Thyroid gland (tissue), 4 donors: ENCODE measurements at regions of chr20 and their contacts with region 1.

Region 1: GRCh38 chr20:35702051-35702823 is 3.0 kb downstream of the ROMO1 start:
- DNase-seq: no peak
- H3K4me3 ChIP-seq: no peak overlapping the region
- H3K27ac ChIP-seq: no peak overlapping the region
- H3K4me1 ChIP-seq: peaks cover 4 to 19% of the 10 kb centered on the region in 2 donors
- H3K27me3 ChIP-seq: no peaks in the 10 kb centered on the region
- CTCF ChIP-seq: no peak
- POLR2A ChIP-seq: no peak

Region 2: DNA sequence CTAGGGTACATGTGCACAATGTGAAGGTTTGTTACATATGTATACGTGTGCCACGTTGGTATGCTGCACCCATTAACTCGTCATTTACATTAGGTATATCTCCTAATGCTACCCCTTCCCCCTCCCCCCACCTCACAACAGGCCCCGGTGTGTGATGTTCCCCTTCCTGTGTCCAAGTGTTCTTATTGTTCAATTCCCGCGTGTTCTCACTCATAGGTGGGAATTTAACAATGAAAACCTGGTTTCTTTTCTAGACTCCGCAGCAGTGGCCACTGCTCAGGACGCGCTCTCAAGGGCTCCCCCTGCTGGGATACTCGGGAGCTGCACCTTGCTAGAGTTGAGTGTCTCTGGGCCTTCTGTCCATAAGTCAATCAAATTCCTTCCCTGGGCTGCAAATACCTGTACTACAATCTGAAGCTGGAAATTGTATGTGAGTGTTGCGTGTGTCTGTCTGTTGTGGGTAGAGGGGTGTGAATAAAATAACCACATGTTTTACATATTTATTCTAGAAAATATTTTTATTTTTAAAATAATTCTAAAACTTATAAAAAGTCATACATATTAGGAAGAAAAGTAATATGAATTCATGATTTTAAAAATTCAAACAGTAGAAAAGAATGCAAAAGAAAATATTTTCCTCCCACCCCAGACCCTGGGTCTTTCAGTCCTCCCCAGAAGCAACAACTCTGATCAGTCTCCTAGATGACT is 255.0 kb before region 1 on chr20:
- intact Hi-C with region 1: no loop called
- DNase-seq: peak; percentile 83 to 90
- H3K4me3 ChIP-seq: peak overlapping the region in 1 of 3 donors; percentile 7
- H3K27ac ChIP-seq: no peak overlapping the region
- H3K4me1 ChIP-seq: no peaks in the 10 kb centered on the region
- H3K27me3 ChIP-seq: no peaks in the 10 kb centered on the region
- CTCF ChIP-seq: peak; percentile 81 to 99 (median 93)
- POLR2A ChIP-seq: no peak

Region 3: DNA sequence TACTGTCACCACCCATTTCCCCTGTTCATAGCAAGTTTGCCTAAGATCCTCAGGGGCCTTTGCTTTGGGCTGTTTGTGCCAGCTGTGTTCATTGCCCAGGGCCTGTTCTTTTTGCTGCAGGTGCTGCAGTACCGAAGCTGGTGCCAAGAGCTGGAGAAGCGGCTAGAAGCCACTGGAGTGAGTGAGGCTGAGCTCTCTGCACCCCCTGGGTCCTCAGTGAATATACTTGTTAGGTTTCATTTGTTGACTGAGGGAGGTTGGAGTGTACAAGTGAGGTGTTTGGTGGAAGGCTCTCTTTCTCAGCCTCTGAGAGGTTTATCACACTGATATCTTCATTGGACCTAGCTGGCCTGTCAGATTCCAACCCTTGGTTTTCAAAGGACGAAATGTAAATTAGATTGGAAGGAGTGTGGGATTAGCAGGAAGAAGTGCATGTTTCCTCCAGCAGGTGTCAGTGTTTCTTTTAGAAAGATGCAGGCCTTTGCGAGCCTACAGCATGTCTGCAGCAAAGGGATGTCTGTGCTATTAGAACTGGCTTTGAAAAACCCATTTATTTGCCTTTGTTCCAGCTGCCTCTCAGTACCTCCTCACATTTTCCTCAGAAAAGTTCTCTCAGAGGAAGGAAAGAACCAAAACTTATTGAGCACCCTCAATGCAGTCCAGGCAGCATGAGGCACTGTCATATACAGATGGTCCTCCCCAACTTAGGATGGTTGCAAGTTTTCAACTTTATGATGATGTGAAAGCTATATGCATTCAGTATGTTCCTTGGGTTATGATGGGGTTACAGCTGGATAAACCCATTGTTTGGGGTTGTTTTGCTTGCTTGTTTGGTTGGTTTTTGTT is 238.6 kb before region 1 on chr20:
- intact Hi-C with region 1: loop called (anchors 10 kb)
- DNase-seq: peak; percentile 38 to 50
- H3K4me3 ChIP-seq: no peak overlapping the region
- H3K27ac ChIP-seq: no peak overlapping the region
- H3K4me1 ChIP-seq: no peaks in the 10 kb centered on the region
- H3K27me3 ChIP-seq: no peaks in the 10 kb centered on the region
- CTCF ChIP-seq: peak in 5 of 6 experiments; percentile 51 to 78 (median 65)
- POLR2A ChIP-seq: no peak